Activated CD4-positive, alpha-beta memory T cell treated with anti-CD3 and anti-CD28 coated beads for 36 hours (primary cell): ENCODE measurements at regions of chr12 and their contacts with region 1.

Region 1: DNA sequence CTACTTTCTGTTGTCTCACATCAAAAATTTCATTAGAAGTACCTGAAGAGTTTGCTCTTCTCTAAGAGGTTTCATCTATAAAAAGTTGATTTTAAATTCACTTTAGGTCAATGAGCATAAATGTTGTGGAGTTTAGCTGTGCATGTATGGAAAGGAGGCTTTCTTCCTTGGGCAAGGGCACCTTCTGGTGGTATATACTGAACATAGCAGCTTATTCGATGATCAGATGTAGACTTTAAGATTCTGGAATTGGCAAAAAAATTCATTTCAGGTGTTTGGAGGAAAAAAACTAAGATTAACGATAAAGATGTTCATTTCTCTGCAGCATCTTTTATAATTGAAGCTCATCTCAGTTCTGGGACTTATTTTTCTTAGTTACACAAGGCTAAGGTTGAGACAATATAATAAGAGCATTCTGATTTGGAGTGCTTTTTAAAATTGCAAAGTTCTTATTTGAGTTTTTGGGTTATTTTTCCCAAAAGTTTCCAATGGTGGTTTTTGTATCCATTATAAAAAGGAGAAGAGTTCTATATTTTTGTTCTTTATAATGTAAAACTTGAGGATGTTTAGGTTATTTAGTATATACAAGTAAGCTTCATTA is 46.8 kb downstream of the TMEM117 start:
- DNase-seq: peak; percentile 18
- H3K4me3 Mint-ChIP-seq: no peak overlapping the region
- H3K27ac Mint-ChIP-seq: no peak overlapping the region
- H3K4me1 Mint-ChIP-seq: no peaks in the 10 kb centered on the region
- H3K27me3 Mint-ChIP-seq: no peaks in the 10 kb centered on the region

Region 2: DNA sequence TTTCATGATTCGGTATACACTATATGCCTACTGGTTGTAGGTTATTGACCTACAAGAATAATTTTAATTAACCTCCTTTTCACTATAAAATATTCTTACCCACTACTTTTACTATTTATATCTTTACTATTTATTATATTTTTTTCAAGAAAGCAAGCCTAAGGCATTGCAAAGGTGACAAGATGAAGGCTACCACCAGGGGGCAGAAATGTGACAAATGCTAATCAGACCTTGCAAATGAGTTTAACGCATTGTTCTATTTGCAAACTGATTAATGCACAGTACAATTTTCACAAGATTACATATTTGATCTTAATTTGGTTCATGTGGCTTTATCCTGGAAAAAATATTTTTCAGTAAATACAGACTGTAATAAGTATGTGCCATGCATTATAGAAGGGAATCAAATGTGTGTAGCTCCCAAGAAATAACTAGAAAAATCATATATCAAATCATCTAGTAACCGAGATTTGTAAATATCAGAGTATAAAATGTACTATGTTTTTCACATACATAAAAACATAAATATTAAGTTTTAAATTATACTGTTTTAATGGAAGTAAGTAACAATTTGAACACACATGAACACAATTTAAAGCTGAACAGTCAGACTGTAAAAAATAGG is 437.6 kb before region 1 on chr12:
- CTCF ChIA-PET with region 1: interaction called, 48 read pairs
- POLR2A ChIA-PET with region 1: no interaction called
- intact Hi-C with region 1: loop called (anchors 1 kb)
- DNase-seq: peak; percentile 55
- H3K4me3 Mint-ChIP-seq: no peak overlapping the region
- H3K27ac Mint-ChIP-seq: no peak overlapping the region
- H3K4me1 Mint-ChIP-seq: no peaks in the 10 kb centered on the region
- H3K27me3 Mint-ChIP-seq: no peaks in the 10 kb centered on the region

Region 3: DNA sequence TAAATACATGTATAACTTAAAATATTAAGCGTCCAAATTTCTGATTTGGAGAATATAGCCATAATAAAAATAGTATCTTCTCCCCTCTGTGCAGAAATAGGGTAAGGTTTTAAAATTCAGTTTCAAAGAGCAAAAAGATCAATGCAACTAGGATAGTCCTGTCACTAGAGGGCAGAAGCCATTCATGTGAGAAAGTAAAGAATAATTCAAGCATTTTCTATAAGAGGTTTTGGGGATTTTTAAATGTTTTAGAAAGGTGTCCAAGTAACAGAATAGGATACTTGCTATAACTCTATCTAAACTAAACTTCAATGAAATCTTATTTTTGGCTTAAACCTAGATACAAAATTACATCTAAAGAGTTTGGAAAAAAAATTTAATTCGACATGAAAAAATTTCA is 381.0 kb before region 1 on chr12:
- CTCF ChIA-PET with region 1: interaction called, 5 read pairs
- POLR2A ChIA-PET with region 1: no interaction called
- intact Hi-C with region 1: loop called (anchors 5 kb)
- DNase-seq: no peak
- H3K4me3 Mint-ChIP-seq: no peak overlapping the region
- H3K27ac Mint-ChIP-seq: no peak overlapping the region
- H3K4me1 Mint-ChIP-seq: no peaks in the 10 kb centered on the region
- H3K27me3 Mint-ChIP-seq: no peaks in the 10 kb centered on the region

Region 4: GRCh38 chr12:43758728-43759563 is 123.7 kb before region 1 on chr12 and contains the starts of genes IRAK4 and PUS7L:
- CTCF ChIA-PET with region 1: interaction called, 11 read pairs
- POLR2A ChIA-PET with region 1: interaction called, 3 read pairs
- intact Hi-C with region 1: loop called (anchors 1 kb)
- DNase-seq: peak; percentile 97
- H3K4me3 Mint-ChIP-seq: peak within 1 kb of the TSS; percentile 94
- H3K27ac Mint-ChIP-seq: peak within 1 kb of the TSS; percentile 98
- H3K4me1 Mint-ChIP-seq: peaks cover 61% of the 10 kb centered on the region
- H3K27me3 Mint-ChIP-seq: no peaks in the 10 kb centered on the region
- total RNA-seq, gene IRAK4: 30.8 to 33.6 TPM
- total RNA-seq, gene PUS7L: 14.8 to 16.0 TPM

Region 5: GRCh38 chr12:43776498-43776897 is 106.2 kb before region 1 on chr12:
- CTCF ChIA-PET with region 1: interaction called, 34 read pairs
- POLR2A ChIA-PET with region 1: no interaction called
- intact Hi-C with region 1: loop called (anchors 1 kb)
- DNase-seq: no peak
- H3K4me3 Mint-ChIP-seq: no peak overlapping the region
- H3K27ac Mint-ChIP-seq: no peak overlapping the region
- H3K4me1 Mint-ChIP-seq: no peaks in the 10 kb centered on the region
- H3K27me3 Mint-ChIP-seq: no peaks in the 10 kb centered on the region

Region 6: DNA sequence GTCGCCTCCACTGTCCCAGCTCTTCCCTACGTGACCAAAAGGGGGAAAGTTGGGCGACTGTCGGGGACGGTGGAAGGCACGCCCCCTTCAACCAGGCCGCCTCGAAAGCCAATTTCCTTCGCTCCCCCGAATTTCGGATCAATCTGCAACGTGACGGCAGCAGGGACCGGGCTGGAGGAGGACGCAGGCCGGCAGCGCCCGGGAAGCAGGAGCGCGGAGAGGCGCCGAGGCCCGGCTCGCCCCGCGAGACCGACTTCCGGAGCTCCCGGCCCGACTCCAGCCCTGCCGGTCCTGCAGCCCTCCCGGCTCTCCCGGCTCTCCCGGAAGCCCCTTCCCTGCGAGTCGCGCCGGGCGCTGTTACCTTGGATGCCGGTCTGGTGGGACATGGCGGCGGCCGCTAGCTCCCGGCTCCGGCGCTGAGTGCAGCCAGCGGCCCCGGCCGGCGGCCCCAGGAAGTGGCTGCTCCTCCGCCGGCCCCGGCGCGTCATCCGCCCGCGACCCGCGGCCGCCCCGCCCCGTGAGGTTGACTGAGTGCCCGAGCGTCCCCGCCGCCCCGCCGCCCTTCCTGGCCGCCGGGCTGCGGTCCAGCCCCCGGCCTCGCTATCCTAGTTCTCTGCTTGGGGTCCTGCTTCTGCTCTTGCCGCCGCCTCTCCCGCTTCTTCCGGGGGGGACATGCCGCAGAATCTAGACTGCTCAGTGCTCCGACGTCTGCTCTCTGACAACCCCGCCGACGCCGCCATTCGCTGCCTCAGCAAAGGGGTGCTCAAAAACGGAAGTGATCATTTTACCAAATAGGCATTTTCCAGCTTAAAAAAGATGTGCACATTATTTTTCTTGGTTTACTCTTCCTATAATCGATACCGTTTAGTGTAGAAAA is 76.6 kb before region 1 on chr12 and contains the start of gene TWF1:
- CTCF ChIA-PET with region 1: interaction called, 26 read pairs
- POLR2A ChIA-PET with region 1: no interaction called
- intact Hi-C with region 1: loop called (anchors 1 kb)
- DNase-seq: peak; percentile 91
- H3K4me3 Mint-ChIP-seq: peak within 1 kb of the TSS; percentile 99
- H3K27ac Mint-ChIP-seq: peak within 1 kb of the TSS; percentile 99
- H3K4me1 Mint-ChIP-seq: peaks cover 31% of the 10 kb centered on the region
- H3K27me3 Mint-ChIP-seq: no peaks in the 10 kb centered on the region
- total RNA-seq, gene TWF1: 19.1 to 19.4 TPM

Region 7: GRCh38 chr12:43835656-43836474 is 46.8 kb before region 1 on chr12 and contains the start of gene TMEM117:
- CTCF ChIA-PET with region 1: interaction called, 5 read pairs
- POLR2A ChIA-PET with region 1: no interaction called
- intact Hi-C with region 1: loop called (anchors 2 kb)
- DNase-seq: peak; percentile 67
- H3K4me3 Mint-ChIP-seq: peak within 1 kb of the TSS; percentile 74
- H3K27ac Mint-ChIP-seq: peak within 1 kb of the TSS; percentile 66
- H3K4me1 Mint-ChIP-seq: peaks cover 44% of the 10 kb centered on the region
- H3K27me3 Mint-ChIP-seq: no peaks in the 10 kb centered on the region
- total RNA-seq, gene TMEM117: 1.7 TPM